CD4-positive, alpha-beta memory T cell (primary cell): ENCODE measurements at regions of chr2 and their contacts with region 1.

Region 1: DNA sequence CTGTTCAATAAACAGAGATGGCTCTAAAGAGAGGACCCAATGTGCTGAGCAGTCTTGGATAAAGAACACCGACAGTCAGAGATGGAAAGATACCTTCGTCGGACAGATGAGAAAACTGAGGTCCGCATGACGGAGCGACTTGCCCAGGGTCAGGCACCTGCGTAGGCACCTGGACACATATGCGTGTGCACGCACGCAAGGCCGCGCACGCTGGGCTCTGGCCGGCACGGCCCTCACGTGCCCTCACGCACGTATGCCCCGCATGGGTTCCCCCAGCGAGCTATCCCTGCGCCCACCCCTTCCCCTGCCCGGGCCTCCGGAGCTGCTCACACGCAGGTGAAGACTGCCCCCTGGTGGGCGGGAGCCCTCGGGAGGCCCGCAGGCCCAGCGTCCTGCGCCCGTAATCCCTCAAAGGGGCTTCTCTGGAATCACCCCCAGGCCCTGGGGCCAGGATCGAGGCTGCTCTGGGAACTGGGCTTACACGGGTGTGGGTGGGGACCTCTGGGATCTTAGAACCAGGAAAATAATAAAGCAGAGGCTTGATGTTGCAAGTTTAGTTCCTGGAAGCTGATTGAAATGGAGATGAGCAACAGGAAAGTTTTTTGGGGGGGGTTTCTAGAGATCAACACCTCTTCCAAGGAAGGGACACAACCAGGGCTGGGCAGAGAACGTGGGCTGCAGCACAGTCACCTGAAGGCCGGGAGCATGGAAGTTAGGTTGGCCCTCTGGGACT is 246.3 kb downstream of the TNS1 start:
- DNase-seq: peak; percentile 43 to 54 (median 48)
- H3K4me3 ChIP-seq: no peak overlapping the region
- H3K4me3 Mint-ChIP-seq: peak overlapping the region; percentile 29 to 72 (median 52)
- H3K27ac ChIP-seq: no peak overlapping the region
- H3K27ac Mint-ChIP-seq: no peak overlapping the region
- H3K4me1 ChIP-seq: peaks cover 19% of the 10 kb centered on the region
- H3K4me1 Mint-ChIP-seq: peaks cover 13 to 29% (median 24%) of the 10 kb centered on the region in 4 donors
- H3K27me3 ChIP-seq: no peaks in the 10 kb centered on the region
- H3K27me3 Mint-ChIP-seq: peaks cover 0 to 6% of the 10 kb centered on the region in 2 donors

Region 2: GRCh38 chr2:216698895-216699294 is 1057.6 kb before region 1 on chr2:
- CTCF ChIA-PET with region 1: interaction called, 4 read pairs
- POLR2A ChIA-PET with region 1: no interaction called
- intact Hi-C with region 1: loop called (anchors 5 kb)
- DNase-seq: peak in 2 of 5 donors; percentile 12 to 14
- H3K4me3 ChIP-seq: no peak overlapping the region
- H3K4me3 Mint-ChIP-seq: no peak overlapping the region
- H3K27ac ChIP-seq: no peak overlapping the region
- H3K27ac Mint-ChIP-seq: no peak overlapping the region
- H3K4me1 ChIP-seq: peaks cover 3% of the 10 kb centered on the region
- H3K4me1 Mint-ChIP-seq: peaks cover 0 to 10% (median 2%) of the 10 kb centered on the region in 4 donors
- H3K27me3 ChIP-seq: peaks cover 12% of the 10 kb centered on the region
- H3K27me3 Mint-ChIP-seq: peaks cover 26% of the 10 kb centered on the region in 2 donors

Region 3: DNA sequence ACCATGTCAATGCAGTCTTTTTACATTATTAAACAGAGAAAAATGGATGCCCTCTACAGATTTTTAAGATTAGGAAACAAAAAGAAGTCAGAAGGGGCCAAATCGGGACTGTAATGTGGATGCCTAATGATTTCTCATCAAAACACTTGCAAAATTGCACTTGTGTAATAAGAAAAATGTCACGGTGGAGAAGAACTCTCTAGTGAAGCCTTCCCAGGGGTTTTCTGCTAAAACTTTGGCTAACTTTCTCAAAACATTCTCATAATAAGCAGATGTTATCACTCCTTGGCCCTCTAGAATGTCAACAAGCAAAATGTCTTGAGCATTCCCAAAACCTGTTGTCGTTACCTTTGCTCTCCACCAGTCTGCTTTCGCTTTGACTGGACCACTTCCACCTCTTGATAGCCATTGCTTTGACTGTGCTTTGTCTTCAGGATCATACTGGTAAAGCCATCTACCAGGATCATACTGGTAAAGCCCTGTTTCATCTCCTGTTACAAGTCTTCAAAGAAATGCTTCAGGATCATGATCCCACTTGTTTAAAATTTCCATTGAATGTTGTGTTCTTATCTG is 19.5 kb after region 1 on chr2:
- CTCF ChIA-PET with region 1: interaction called, 14 read pairs
- POLR2A ChIA-PET with region 1: no interaction called
- intact Hi-C with region 1: no loop called
- DNase-seq: no peak
- H3K4me3 ChIP-seq: no peak overlapping the region
- H3K4me3 Mint-ChIP-seq: no peak overlapping the region
- H3K27ac ChIP-seq: no peak overlapping the region
- H3K27ac Mint-ChIP-seq: no peak overlapping the region
- H3K4me1 ChIP-seq: peaks cover 9% of the 10 kb centered on the region
- H3K4me1 Mint-ChIP-seq: peaks cover 15 to 20% (median 17%) of the 10 kb centered on the region in 4 donors
- H3K27me3 ChIP-seq: no peaks in the 10 kb centered on the region
- H3K27me3 Mint-ChIP-seq: no peaks in the 10 kb centered on the region